BJ (cell line): ENCODE measurements at regions of chr11 and their contacts with region 1.

Region 1: DNA sequence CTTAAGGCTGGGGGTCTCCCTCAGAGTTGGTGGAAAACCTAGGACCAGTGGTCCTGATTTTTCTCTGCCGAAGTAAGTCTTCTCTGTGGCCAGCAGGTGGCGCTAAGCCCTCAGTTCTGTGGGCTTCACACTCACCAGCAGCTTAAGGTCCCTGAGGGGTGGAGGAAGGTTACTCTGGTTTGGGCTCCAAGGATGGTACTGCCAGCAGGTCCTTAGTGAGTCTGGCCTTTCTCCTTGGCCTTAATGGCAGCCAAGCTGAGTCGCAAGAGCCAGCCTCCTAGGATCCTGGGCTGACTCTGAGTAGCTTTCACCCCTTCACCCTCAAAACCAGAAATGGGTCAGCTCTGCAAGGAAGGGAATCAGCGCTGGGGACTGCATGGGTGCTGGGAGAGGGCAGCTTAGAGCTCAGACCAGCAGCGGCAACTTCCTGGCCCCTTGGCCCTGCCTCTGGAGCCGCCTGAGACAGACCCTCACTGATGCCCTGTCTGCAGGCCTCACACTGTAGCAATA is 4.4 kb downstream of the KCNJ11 start:
- DNase-seq: no peak
- H3K4me3 ChIP-seq: no peak overlapping the region
- H3K27me3 ChIP-seq: no peaks in the 10 kb centered on the region
- CTCF ChIP-seq: peak; percentile 92

Region 2: GRCh38 chr11:17354601-17354991 is 29.5 kb before region 1 on chr11:
- CTCF ChIA-PET with region 1: interaction called, 17 read pairs
- POLR2A ChIA-PET with region 1: no interaction called
- DNase-seq: peak; percentile 19
- H3K4me3 ChIP-seq: no peak overlapping the region
- H3K27me3 ChIP-seq: no peaks in the 10 kb centered on the region
- CTCF ChIP-seq: peak; percentile 67

Region 3: DNA sequence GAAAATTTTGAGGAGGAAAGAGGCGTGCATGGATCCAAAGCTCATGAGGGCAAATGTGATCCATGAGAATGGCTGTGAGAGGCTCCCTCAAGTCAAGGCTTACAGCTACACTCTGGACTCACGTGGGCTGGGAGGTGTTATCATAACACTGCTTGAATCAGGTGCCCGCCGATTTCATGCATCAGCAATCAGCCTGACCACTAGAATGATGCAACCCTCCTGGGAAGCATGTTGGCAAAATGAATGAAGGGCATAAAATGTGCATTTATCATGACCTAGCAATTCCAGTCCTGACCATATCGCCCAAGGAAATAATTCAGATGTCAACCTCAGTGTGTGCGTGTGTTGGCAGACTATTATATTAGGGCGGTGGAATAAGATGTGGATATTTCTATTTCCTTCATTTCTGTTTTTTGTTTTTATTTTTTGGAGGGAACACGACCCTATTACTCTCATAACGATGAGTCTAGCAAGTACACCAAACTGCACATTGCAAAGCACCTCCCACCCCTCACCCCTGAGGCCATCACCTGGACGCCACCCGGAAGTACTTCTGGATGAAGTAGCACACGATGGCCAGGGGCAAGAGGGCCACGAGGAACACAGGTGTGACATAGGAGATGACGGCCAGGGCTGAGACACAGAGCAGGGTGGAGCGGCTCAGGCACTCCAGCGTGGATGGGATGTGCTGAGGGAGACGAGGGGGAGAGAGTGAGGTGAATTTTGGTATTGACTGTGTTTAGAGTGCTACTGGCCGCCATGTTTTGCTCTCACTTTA is 20.1 kb after region 1 on chr11:
- CTCF ChIA-PET with region 1: interaction called, 66 read pairs
- POLR2A ChIA-PET with region 1: no interaction called
- DNase-seq: no peak
- H3K4me3 ChIP-seq: no peak overlapping the region
- H3K27me3 ChIP-seq: peaks cover 3% of the 10 kb centered on the region; the same call in 1 of the 2 replicates
- CTCF ChIP-seq: no peak

Region 4: GRCh38 chr11:17504330-17505107 is 120.5 kb after region 1 on chr11:
- CTCF ChIA-PET with region 1: interaction called, 101 read pairs
- POLR2A ChIA-PET with region 1: no interaction called
- DNase-seq: no peak
- H3K4me3 ChIP-seq: no peak overlapping the region
- H3K27me3 ChIP-seq: peaks cover 5% of the 10 kb centered on the region
- CTCF ChIP-seq: peak; percentile 91

Region 5: DNA sequence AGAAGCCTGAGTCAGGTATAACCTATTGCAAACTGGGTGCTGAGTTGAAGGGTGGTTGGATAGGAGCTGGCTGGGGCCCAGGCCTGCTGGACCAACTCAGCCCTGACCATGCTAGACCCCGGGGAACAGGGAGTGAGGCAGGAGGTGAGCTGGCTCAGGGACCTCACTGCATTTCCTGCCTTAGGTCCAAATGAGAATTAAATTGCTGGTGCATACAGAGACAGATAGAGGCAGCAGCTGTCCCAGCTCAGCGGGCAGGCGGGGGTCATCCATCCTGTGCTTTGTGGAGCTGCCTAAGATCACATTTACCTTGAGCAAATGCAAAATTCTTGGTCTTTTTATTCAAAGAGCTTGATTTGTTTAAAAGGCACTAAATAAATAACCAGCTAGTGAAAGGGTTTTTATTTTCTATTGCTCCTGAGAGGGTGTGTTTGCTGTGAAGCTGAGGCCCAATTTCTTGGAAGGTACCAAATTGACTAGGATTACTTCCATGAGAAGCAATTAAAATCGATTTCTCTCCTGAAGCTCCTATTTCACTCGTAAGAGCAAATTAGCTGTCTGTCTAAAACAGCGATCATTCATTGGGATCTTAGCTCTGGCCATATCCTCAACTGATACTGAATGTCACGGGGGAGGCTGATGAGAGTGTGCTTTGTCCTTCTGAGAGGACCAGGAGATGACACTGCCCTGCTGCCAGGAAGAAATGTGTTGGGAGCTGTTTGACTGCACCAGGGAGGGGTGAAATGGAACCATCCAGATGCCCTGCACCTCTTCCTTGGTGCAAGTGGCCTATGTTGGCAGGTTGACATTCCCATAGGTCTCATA is 135.2 kb after region 1 on chr11:
- CTCF ChIA-PET with region 1: interaction called, 15 read pairs
- POLR2A ChIA-PET with region 1: no interaction called
- DNase-seq: no peak
- H3K4me3 ChIP-seq: no peak overlapping the region
- H3K27me3 ChIP-seq: peaks cover 7% of the 10 kb centered on the region
- CTCF ChIP-seq: no peak